ENCODE measurements at regions of chr7 and their contacts with region 1.

Region 1: GRCh38 chr7:140269004-140269638 is 92.3 kb upstream of the KDM7A start:
- DNase-seq: no peak
- H3K4me3 Mint-ChIP-seq: no peak overlapping the region
- H3K27ac Mint-ChIP-seq: peak overlapping the region; percentile 78
- H3K4me1 Mint-ChIP-seq: peaks cover 25% of the 10 kb centered on the region
- H3K27me3 Mint-ChIP-seq: no peaks in the 10 kb centered on the region

Region 2: GRCh38 chr7:140249036-140249806 is 19.9 kb before region 1 on chr7:
- CTCF ChIA-PET with region 1: interaction called, 34 read pairs
- POLR2A ChIA-PET with region 1: no interaction called
- DNase-seq: no peak
- H3K4me3 Mint-ChIP-seq: no peak overlapping the region
- H3K27ac Mint-ChIP-seq: no peak overlapping the region
- H3K4me1 Mint-ChIP-seq: peaks cover 24% of the 10 kb centered on the region
- H3K27me3 Mint-ChIP-seq: no peaks in the 10 kb centered on the region

Measured in activated CD4-positive, alpha-beta T cell treated with anti-CD3 and anti-CD28 coated beads, Interleukin-2, amount 10 ng/mL, durations not matched to agents 7 days and 5 days (primary cell).